ENCODE measurements at regions of chr1 and their contacts with region 1.

Region 1: GRCh38 chr1:28792644-28793121 is 19.3 kb upstream of the OPRD1 start:
- DNase-seq: no peak
- H3K4me3 ChIP-seq: no peak overlapping the region
- H3K27ac ChIP-seq: no peak overlapping the region
- H3K4me1 ChIP-seq: no peaks in the 10 kb centered on the region
- H3K27me3 ChIP-seq: peaks cover 0 to 25% of the 10 kb centered on the region in 2 donors
- CTCF ChIP-seq: no peak

Region 2: GRCh38 chr1:28751315-28752060 is 41.2 kb before region 1 on chr1:
- intact Hi-C with region 1: no loop called
- DNase-seq: no peak
- H3K4me3 ChIP-seq: no peak overlapping the region
- H3K27ac ChIP-seq: no peak overlapping the region
- H3K4me1 ChIP-seq: peaks cover 5 to 94% (median 63%) of the 10 kb centered on the region in 4 donors
- H3K27me3 ChIP-seq: no peaks in the 10 kb centered on the region
- CTCF ChIP-seq: no peak

Region 3: DNA sequence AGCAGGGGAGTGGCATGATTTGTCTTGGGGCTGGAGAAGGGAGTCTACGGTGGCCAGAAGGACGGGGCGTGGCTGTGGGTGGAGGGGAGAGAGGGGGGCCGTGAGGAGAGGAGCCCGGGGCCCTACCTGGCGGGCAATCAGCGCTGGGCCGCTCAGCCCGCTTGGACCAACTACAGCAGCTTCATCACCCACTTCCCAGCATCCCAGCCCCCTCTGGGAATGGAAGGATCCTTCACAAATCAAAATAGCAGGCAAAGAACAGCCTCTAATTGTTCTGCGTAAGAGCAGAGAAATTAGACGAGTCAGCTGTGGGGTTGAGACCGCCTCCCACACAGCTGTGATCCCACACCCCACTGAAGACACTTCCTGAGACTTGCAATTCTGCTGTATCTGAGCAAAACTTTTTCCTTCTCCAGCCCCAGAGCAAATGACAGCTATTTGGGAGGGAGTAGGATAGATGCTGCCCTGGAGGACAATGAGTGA is 62.8 kb after region 1 on chr1:
- intact Hi-C with region 1: loop called (anchors 10 kb)
- DNase-seq: no peak
- H3K4me3 ChIP-seq: no peak overlapping the region
- H3K27ac ChIP-seq: no peak overlapping the region
- H3K4me1 ChIP-seq: no peaks in the 10 kb centered on the region
- H3K27me3 ChIP-seq: peaks cover 0 to 20% of the 10 kb centered on the region in 2 donors
- CTCF ChIP-seq: no peak

Region 4: DNA sequence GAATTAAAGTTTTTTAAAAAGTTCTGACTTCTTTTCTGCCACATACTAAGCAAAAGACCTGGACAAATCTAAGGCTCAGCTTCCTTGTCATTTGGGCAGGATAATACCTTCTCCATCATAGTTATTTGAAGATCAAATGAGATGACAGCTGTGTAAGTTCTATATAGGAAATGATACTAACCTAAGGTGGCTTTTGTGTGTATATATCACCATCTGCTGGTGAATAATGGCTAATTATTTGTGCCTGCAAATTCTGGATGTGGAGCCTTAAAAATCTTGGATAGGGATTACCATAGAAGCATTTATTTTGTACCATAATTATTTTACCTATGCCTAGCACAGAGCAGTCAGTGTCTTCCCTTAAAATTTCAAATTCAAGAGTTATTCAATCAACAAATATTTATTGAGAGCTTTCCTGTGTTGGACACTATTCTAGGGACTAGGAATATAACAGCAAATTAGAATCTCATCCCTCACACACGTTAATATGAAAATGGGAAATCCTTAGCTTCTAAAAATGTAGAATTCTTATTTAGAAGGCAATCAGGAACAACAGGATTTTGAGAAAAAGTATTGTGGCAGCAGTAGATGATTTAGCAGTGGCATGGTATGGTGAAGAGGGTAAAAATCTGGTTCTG is 241.3 kb after region 1 on chr1:
- intact Hi-C with region 1: loop called (anchors 10 kb)
- DNase-seq: no peak
- H3K4me3 ChIP-seq: no peak overlapping the region
- H3K27ac ChIP-seq: no peak overlapping the region
- H3K4me1 ChIP-seq: no peaks in the 10 kb centered on the region
- H3K27me3 ChIP-seq: no peaks in the 10 kb centered on the region
- CTCF ChIP-seq: peak; percentile 63 to 77

Region 5: DNA sequence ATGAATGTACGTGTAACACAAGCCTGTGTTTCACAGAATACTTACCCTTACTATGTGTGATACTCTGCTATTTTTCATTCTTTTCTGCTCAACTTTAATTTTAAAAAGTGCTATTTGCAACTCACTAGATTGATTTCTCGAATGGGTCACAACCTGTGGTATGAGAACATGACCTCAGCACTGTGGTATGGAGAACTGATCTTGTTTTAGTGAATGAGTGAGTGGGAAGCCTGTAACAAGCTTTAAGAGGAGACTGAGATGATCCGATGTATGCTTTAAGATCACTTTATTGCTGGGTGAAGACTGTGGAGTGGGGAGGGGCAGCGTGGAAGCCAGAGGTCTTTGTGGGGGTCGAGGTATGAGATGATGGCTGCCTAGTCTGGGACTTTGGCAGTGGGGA is 416.5 kb after region 1 on chr1:
- intact Hi-C with region 1: loop called (anchors 5 kb)
- DNase-seq: no peak
- H3K4me3 ChIP-seq: no peak overlapping the region
- H3K27ac ChIP-seq: no peak overlapping the region
- H3K4me1 ChIP-seq: no peaks in the 10 kb centered on the region
- H3K27me3 ChIP-seq: no peaks in the 10 kb centered on the region
- CTCF ChIP-seq: no peak